Heart right ventricle (tissue), 16 donors: ENCODE measurements at regions of chr10 and their contacts with region 1.

Region 1: GRCh38 chr10:123255670-123256069 is 101.5 kb downstream of the BUB3 start:
- DNase-seq: no peak
- ATAC-seq: no peak
- H3K4me3 ChIP-seq: no peak overlapping the region
- H3K27ac ChIP-seq: no peak overlapping the region
- H3K4me1 ChIP-seq: no peaks in the 10 kb centered on the region
- H3K27me3 ChIP-seq: no peaks in the 10 kb centered on the region
- CTCF ChIP-seq: no peak

Region 2: DNA sequence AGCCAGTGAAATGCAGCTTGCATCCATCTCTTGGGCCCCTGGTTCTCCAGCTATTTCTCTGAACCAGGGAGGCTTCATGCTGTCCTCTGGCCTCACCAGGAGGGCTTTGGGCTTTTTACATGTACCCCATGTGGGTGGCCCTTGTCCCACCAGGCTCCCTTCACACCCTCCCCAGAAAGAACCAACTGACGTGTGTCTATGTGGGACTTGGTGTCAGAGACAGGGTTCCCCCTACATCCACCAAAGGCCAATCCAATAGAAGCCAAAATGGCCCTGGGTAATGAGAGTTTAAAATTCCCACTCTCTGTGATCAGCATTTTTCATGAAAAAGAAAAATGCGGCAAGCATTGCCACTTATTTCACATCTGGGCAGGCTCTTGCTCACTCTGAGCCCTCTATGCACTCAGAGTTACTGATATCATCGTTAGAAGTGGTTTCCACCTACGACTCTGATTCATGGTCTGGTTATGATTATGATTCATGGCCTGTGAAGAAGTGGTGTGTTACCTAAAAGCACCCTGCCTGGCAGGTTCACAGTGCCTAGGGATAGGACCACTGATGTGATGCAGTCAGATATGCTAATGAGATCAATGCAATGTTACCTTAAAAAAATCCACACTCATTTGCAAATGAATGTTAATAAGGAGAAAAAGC is 32.1 kb after region 1 on chr10:
- intact Hi-C with region 1: loop called in 1 of 10 experiments (anchors 1 kb)
- DNase-seq: no peak
- ATAC-seq: no peak
- H3K4me3 ChIP-seq: no peak overlapping the region
- H3K27ac ChIP-seq: no peak overlapping the region
- H3K4me1 ChIP-seq: no peaks in the 10 kb centered on the region
- H3K27me3 ChIP-seq: no peaks in the 10 kb centered on the region
- CTCF ChIP-seq: no peak